ENCODE measurements at regions of chr3 and their contacts with region 1.

Region 1: GRCh38 chr3:107117922-107118536 is 259.2 kb upstream of the CCDC54 start:
- DNase-seq: peak; percentile 49
- H3K4me3 ChIP-seq: no peak overlapping the region
- CTCF ChIP-seq: peak; percentile 58

Region 2: GRCh38 chr3:106609666-106610301 is 508.2 kb before region 1 on chr3:
- CTCF ChIA-PET with region 1: interaction called, 25 read pairs
- POLR2A ChIA-PET with region 1: no interaction called
- DNase-seq: peak; percentile 86
- H3K4me3 ChIP-seq: no peak overlapping the region
- CTCF ChIP-seq: peak; percentile 64

Region 3: GRCh38 chr3:107064445-107065060 is 53.5 kb before region 1 on chr3:
- CTCF ChIA-PET with region 1: interaction called, 30 read pairs
- POLR2A ChIA-PET with region 1: no interaction called
- DNase-seq: no peak
- H3K4me3 ChIP-seq: no peak overlapping the region
- CTCF ChIP-seq: peak; percentile 63

Region 4: DNA sequence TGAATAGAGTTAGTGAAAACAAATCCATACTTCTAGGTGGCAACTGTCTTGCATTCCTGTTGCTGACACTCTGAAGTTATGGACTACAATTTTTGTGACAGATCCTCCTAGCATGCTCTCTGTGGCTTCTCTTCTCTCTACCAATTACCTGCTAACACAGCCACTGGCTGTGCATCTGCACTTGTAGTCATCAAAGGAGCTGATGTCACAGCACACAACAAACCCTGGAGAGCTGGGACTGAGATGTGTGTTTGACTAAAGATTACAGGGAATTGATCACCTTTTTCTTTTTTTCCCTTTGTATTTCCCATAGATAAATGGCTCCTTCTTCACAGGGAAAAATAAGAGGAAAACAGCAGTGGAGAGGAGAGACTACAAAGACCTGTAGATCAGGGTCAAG is 19.2 kb before region 1 on chr3:
- CTCF ChIA-PET with region 1: interaction called, 12 read pairs
- POLR2A ChIA-PET with region 1: no interaction called
- DNase-seq: no peak
- H3K4me3 ChIP-seq: no peak overlapping the region
- CTCF ChIP-seq: no peak

Region 5: GRCh38 chr3:107106316-107106715 is 11.7 kb before region 1 on chr3:
- CTCF ChIA-PET with region 1: interaction called, 39 read pairs
- POLR2A ChIA-PET with region 1: no interaction called
- DNase-seq: no peak
- H3K4me3 ChIP-seq: no peak overlapping the region
- CTCF ChIP-seq: no peak